Endothelial cell of umbilical vein (primary cell): ENCODE measurements at regions of chr2 and their contacts with region 1.

Region 1: GRCh38 chr2:181904022-181904632 is 12.6 kb downstream of the ITPRID2 start:
- DNase-seq: peak; percentile 89
- H3K4me3 ChIP-seq: peak overlapping the region in 1 of 3 experiments; percentile 23
- H3K27ac ChIP-seq: peak overlapping the region; percentile 29
- H3K4me1 ChIP-seq: peaks cover 48% of the 10 kb centered on the region
- H3K27me3 ChIP-seq: no peaks in the 10 kb centered on the region
- CTCF ChIP-seq: peak; percentile 40 to 50
- POLR2A ChIP-seq: no peak

Region 2: DNA sequence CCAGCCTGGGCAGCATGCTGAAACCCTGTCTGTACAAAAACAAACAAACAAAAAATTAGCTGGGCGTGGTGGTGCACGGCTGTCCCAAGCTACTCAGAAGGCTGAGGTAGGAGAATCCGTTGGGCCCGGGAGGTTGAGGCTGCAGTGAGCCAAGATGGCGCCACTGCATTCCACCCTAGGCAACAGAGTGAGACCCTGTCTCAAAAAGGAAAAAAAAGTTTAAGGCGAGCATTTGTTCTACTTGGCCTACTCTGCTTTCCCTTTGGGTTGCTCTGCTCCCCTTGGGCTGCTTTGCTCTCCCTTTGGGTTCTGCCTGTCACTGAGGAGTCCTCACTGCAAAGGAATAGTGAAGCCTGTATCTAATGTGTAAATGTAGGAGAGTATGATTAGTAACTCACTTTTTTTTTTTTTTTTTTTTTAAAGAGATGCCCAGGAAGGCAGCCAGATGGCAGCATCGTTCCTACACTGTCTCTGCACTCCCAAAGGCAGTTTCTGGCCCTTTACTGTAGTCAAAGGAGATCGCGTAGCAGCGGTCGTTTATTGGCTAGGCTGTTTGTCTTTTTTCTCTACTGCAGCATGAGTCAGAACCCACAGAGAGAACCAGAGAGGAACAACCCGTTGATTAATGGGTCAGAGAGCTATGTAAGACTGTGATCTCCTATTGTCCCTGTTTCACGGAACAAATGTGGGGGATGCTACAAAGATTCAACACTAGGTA is 1778.7 kb before region 1 on chr2:
- CTCF ChIA-PET with region 1: interaction called, 10 read pairs
- POLR2A ChIA-PET with region 1: no interaction called
- dilution Hi-C with region 1: no loop called
- intact Hi-C with region 1: no loop called
- DNase-seq: peak; percentile 80
- H3K4me3 ChIP-seq: no peak overlapping the region
- H3K27ac ChIP-seq: no peak overlapping the region
- H3K4me1 ChIP-seq: no peaks in the 10 kb centered on the region
- H3K27me3 ChIP-seq: peaks cover 4 to 12% of the 10 kb centered on the region in 2 experiments
- CTCF ChIP-seq: peak; percentile 38 to 55
- POLR2A ChIP-seq: no peak

Region 3: GRCh38 chr2:181742922-181743722 is 161.0 kb before region 1 on chr2:
- CTCF ChIA-PET with region 1: interaction called, 415 read pairs
- POLR2A ChIA-PET with region 1: interaction called, 8 read pairs
- dilution Hi-C with region 1: no loop called
- intact Hi-C with region 1: loop called (anchors 1 kb)
- DNase-seq: peak; percentile 83
- H3K4me3 ChIP-seq: no peak overlapping the region
- H3K27ac ChIP-seq: peak overlapping the region; percentile 34
- H3K4me1 ChIP-seq: peaks cover 15% of the 10 kb centered on the region
- H3K27me3 ChIP-seq: no peaks in the 10 kb centered on the region
- CTCF ChIP-seq: peak; percentile 37 to 39
- POLR2A ChIP-seq: no peak

Region 4: DNA sequence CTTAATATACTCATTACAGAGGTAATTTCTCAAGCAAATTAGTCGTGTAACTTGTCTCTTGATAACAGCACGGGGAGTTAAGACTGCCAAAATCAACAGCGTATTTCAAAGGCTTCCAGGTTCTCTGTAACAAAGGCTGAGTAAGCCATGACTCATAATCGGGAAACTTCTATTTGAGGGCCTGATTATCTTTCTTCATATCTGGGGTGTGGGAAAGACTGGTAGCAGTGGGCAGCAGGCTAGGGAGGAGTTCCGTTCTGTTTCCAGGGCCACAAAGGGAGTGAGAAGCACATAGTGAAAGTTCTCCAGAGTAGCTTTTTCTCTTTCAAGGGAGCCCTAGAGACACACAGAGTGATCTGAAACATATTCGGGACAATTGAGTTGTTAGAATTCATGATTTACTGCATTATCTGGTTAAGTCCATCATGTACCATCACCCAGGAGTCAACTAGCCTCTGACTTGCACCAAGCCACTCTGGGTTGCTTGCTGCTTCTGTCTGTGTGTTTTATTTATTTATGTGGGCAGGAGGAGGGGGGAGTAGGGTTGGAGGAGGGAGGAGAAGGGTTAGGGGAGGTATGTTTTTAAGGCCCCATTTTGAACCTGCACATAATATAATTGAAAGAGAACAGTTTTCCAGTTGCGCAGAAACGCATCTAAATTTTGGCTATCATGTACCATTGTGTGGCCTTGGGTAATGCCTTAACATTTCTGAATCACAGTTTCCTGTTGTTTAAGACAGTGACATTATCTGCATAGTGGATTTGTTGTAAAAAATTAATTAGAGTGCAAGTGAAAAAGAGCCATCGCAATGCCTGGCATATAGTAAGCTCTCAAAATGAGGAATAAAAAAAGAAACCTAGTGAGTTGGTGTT is 93.1 kb before region 1 on chr2:
- CTCF ChIA-PET with region 1: interaction called, 15 read pairs
- POLR2A ChIA-PET with region 1: interaction called, 7 read pairs
- dilution Hi-C with region 1: no loop called
- intact Hi-C with region 1: loop called (anchors 2 kb)
- DNase-seq: peak; percentile 99
- H3K4me3 ChIP-seq: peak overlapping the region in 1 of 3 experiments; percentile 18
- H3K27ac ChIP-seq: peak overlapping the region; percentile 93
- H3K4me1 ChIP-seq: peaks cover 61% of the 10 kb centered on the region
- H3K27me3 ChIP-seq: no peaks in the 10 kb centered on the region
- CTCF ChIP-seq: no peak
- POLR2A ChIP-seq: peak; percentile 61

Region 5: GRCh38 chr2:181953881-181954537 is 49.9 kb after region 1 on chr2:
- CTCF ChIA-PET with region 1: interaction called, 16 read pairs
- POLR2A ChIA-PET with region 1: no interaction called
- dilution Hi-C with region 1: no loop called
- intact Hi-C with region 1: no loop called
- DNase-seq: peak; percentile 81
- H3K4me3 ChIP-seq: peak overlapping the region; percentile 33 to 42 (median 39)
- H3K27ac ChIP-seq: peak overlapping the region; percentile 74
- H3K4me1 ChIP-seq: peaks cover 29% of the 10 kb centered on the region
- H3K27me3 ChIP-seq: no peaks in the 10 kb centered on the region
- CTCF ChIP-seq: peak; percentile 47 to 63
- POLR2A ChIP-seq: no peak

Region 6: DNA sequence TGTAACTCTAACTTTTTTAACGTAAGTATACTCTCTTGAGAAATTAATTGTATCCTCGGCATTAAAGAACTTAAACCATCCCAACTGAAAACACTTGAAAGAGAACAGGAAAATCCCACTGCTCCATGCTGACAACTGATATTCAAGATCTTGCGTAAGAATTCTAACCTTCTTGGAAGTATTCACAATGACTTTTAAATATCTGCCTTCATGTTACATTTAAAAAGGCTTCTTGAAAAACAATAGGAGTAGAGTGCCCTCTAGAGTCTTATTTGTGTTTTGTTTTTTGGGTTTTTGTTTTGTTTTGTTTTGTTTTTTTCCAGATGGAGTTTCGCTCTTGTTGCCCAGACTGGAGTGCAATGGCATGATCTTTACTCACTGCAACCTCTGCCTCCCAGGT is 746.6 kb after region 1 on chr2:
- CTCF ChIA-PET with region 1: no interaction called
- POLR2A ChIA-PET with region 1: no interaction called
- dilution Hi-C with region 1: no loop called
- intact Hi-C with region 1: loop called (anchors 10 kb)
- DNase-seq: peak; percentile 67
- H3K4me3 ChIP-seq: no peak overlapping the region
- H3K27ac ChIP-seq: no peak overlapping the region
- H3K4me1 ChIP-seq: no peaks in the 10 kb centered on the region
- H3K27me3 ChIP-seq: no peaks in the 10 kb centered on the region
- CTCF ChIP-seq: peak; percentile 15 to 30
- POLR2A ChIP-seq: no peak